Activated CD4-positive, alpha-beta T cell treated with anti-CD3 and anti-CD28 coated beads, Interleukin-2, amount 10 ng/mL, durations not matched to agents 7 days and 5 days (primary cell): ENCODE measurements at regions of chr1 and their contacts with region 1.

Region 1: GRCh38 chr1:26787706-26788514 is at the start of gene PIGV:
- DNase-seq: peak; percentile 86
- H3K4me3 Mint-ChIP-seq: peak within 1 kb of the TSS; percentile 86
- H3K27ac Mint-ChIP-seq: peak within 1 kb of the TSS; percentile 99
- H3K4me1 Mint-ChIP-seq: peaks cover 69% of the 10 kb centered on the region
- H3K27me3 Mint-ChIP-seq: no peaks in the 10 kb centered on the region
- total RNA-seq, gene PIGV: 16.4 to 16.9 TPM

Region 2: GRCh38 chr1:26546375-26546774 is 241.5 kb before region 1 on chr1:
- CTCF ChIA-PET with region 1: no interaction called
- POLR2A ChIA-PET with region 1: no interaction called
- DNase-seq: no peak
- H3K4me3 Mint-ChIP-seq: peak overlapping the region; percentile 90
- H3K27ac Mint-ChIP-seq: peak overlapping the region; percentile 86
- H3K4me1 Mint-ChIP-seq: peaks cover 72% of the 10 kb centered on the region
- H3K27me3 Mint-ChIP-seq: no peaks in the 10 kb centered on the region

Region 3: GRCh38 chr1:26602378-26602959 is 185.4 kb before region 1 on chr1:
- CTCF ChIA-PET with region 1: interaction called, 33 read pairs
- POLR2A ChIA-PET with region 1: interaction called, 3 read pairs
- DNase-seq: peak; percentile 72
- H3K4me3 Mint-ChIP-seq: no peak overlapping the region
- H3K27ac Mint-ChIP-seq: no peak overlapping the region
- H3K4me1 Mint-ChIP-seq: peaks cover 16% of the 10 kb centered on the region
- H3K27me3 Mint-ChIP-seq: peaks cover 21% of the 10 kb centered on the region

Region 4: GRCh38 chr1:26697978-26698849 is 89.7 kb before region 1 on chr1:
- CTCF ChIA-PET with region 1: interaction called, 34 read pairs
- POLR2A ChIA-PET with region 1: interaction called, 11 read pairs
- DNase-seq: peak; percentile 67
- H3K4me3 Mint-ChIP-seq: no peak overlapping the region
- H3K27ac Mint-ChIP-seq: no peak overlapping the region
- H3K4me1 Mint-ChIP-seq: peaks cover 17% of the 10 kb centered on the region
- H3K27me3 Mint-ChIP-seq: no peaks in the 10 kb centered on the region

Region 5: GRCh38 chr1:26767714-26768113 is 20.2 kb before region 1 on chr1:
- CTCF ChIA-PET with region 1: interaction called, 11 read pairs
- POLR2A ChIA-PET with region 1: no interaction called
- DNase-seq: no peak
- H3K4me3 Mint-ChIP-seq: no peak overlapping the region
- H3K27ac Mint-ChIP-seq: no peak overlapping the region
- H3K4me1 Mint-ChIP-seq: peaks cover 17% of the 10 kb centered on the region
- H3K27me3 Mint-ChIP-seq: no peaks in the 10 kb centered on the region

Region 6: DNA sequence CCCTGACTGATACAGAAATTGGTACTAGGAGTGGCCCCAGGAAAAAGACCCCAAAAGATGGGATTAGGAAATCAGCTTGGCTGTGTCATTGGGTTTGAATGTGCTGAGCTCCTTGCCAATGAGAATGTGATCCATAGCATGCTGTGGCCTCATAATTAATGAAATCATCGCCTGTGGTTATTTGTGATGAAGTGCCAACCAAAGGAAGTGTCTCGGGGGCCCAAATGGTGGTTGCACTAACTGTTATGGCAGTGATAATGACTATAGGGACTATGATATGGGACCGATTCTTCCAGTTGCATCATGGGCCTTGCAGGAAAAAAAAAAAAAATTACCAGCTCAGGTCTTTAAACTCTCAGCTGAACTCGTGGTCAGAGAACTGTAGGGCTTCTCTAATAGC is 23.1 kb after region 1 on chr1:
- CTCF ChIA-PET with region 1: interaction called, 14 read pairs
- POLR2A ChIA-PET with region 1: interaction called, 3 read pairs
- DNase-seq: no peak
- H3K4me3 Mint-ChIP-seq: no peak overlapping the region
- H3K27ac Mint-ChIP-seq: no peak overlapping the region
- H3K4me1 Mint-ChIP-seq: peaks cover 20% of the 10 kb centered on the region
- H3K27me3 Mint-ChIP-seq: no peaks in the 10 kb centered on the region

Region 7: DNA sequence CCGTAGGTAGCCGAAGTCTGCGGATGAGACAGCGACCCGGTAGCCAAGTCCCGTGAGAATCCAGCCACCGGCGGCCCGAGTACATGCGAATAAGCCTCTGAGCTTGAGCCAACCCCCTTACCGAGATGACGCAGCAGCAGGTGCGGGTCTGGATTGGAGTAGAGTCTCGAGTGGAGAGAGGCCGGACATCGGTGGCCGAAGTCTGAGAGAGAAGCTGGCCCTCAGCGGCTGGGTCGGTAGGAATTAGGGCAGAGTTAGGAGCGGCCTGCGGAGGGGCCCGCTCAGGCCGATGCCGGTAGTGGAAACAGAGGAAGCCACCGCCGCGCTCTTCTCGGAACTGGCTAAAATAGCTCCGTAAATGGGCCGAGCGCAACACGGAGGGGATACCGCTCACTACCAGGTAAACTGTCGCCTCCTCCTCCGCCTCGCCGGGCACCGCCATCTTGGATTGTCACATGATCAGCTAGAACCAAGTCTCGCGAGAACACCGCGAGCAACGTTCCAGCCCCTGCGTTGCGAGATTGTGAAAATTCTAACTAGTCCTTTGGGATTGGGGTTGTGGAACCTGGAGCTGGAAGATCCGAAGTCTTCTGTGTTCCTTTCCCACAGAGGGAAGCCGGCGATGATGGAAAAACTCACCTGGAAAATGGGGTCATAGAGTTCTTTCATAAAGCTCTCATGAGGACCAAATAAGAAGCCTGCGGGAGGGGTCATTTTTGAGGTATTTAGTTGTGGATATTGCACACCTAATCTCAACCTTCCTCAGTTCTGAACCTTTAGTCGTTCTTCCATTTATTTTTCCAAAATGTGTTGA is 112.3 kb after region 1 on chr1 and contains the start of gene GPATCH3:
- CTCF ChIA-PET with region 1: no interaction called
- POLR2A ChIA-PET with region 1: no interaction called
- DNase-seq: peak; percentile 94
- H3K4me3 Mint-ChIP-seq: peak within 1 kb of the TSS; percentile 91
- H3K27ac Mint-ChIP-seq: peak within 1 kb of the TSS; percentile 99
- H3K4me1 Mint-ChIP-seq: peaks cover 35% of the 10 kb centered on the region
- H3K27me3 Mint-ChIP-seq: no peaks in the 10 kb centered on the region
- total RNA-seq, gene GPATCH3: 14.0 to 14.8 TPM